ENCODE measurements at regions of chr12 and their contacts with region 1.

Region 1: DNA sequence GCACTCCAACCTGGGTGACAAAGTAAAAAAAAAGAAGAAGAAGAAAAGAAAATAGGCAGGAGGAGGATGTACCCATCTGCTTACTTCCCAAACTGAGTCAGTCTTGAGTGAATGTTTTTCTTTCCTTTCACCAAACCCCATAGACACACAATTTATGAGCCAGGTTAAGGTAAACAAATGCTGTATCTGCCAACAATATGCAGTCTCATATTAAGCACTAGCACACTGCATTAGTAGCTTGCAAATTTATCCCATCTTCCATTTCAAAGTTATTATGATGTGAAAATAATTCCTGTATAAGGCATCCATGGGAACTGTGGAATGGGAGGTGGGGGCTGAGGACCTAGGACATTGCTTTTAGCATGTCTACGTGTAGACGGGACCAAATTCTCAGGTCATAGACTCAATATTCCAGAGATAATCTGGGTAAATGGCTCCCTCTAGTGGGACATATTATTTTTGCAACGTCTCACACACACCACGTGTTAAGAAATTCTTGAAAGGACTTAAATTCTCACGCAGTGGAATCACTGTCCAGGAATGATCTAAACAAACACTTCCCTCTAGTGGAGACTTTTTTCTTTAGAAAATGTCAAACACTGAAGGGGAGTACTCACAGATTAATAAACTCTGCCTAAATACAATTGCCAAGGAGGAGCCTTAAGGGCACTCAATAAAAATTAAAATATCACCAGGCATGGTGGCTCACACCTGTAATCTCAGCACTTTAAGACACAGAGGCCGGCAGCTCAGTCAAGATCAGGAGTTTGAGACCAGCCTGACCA is 17.1 kb upstream of the OR10P1 start:
- DNase-seq: peak in 1 of 10 donors; percentile 14
- H3K4me3 ChIP-seq: no peak overlapping the region
- H3K27ac ChIP-seq: no peak overlapping the region
- H3K27me3 ChIP-seq: peaks cover 0 to 7% (median 0%) of the 10 kb centered on the region in 45 donors
- CTCF ChIP-seq: peak in 55 of 56 donors; percentile 77 to 98 (median 91)

Region 2: DNA sequence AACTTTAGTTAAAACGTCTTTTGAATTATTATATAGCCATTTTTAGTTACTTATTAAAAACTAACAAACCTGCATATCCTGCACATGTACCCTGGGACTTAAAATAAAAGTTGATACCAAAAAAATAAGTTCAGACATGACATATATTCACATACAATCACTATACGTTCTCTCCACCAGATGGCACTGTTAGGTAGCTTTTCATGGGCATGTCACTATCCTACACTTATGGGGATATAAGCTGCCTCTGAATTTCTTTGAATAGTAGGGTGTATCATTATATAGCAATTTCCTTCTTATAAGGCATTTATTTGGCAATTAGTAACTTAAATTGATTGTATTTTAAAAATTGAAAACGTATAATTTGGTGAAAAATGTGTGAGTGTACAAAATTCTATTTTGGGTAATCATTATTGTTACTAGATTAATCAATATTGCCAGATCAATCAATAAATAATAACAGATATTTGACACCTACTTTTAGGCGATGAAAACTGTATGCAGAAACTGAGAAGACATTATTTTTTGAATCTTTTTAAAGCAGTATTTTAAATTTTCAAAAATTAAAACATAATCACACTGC is 430.5 kb before region 1 on chr12:
- intact Hi-C with region 1: loop called (anchors 2 kb)
- DNase-seq: peak in 2 of 10 donors; percentile 11 to 38
- H3K4me3 ChIP-seq: no peak overlapping the region
- H3K27ac ChIP-seq: no peak overlapping the region
- H3K27me3 ChIP-seq: peaks cover 0 to 6% (median 0%) of the 10 kb centered on the region in 45 donors
- CTCF ChIP-seq: peak in 55 of 56 donors; percentile 58 to 99 (median 87)

Measured in dorsolateral prefrontal cortex (tissue), 120 donors.